Activated CD4-positive, alpha-beta T cell treated with anti-CD3 and anti-CD28 coated beads for 36 hours (primary cell): ENCODE measurements at regions of chr7 and their contacts with region 1.

Region 1: DNA sequence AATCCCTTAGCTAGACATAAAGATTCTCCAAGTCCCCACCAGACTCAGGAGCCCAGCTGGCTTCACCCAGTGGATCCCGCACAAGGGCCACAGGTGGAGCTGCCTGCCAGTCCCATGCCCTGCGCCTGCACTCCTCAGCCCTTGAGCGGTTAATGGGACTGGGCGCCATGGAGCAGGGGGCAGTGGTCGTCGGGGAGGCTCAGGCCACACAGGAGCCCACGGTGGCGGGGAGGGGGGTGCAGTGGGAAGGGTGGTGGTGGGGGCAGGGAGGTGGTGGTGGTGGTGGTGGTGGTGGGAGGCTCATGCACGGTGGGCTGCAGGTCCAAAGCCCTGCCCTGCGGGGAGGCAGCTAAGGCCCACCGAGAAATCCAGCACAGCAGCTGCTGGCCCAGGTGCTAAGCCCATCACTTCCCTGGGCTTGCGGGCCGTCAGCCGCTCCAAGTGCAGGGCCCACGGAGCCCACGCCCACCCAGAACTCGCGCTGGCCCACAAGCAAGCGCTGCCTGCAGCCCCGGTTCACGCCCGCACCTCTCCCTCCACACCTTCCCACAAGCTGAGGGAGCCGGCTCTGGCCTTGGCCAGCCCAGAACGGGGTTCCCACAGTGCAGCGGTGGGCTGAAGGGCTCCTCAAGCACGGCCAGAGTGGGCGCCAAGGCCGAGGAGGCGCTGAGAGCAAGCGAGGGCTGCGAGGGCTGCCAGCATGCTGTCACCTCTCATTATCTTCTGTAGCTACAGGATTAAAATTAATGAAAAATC is 732.5 kb upstream of the POM121L12 start:
- DNase-seq: no peak
- ATAC-seq: no peak
- H3K4me3 Mint-ChIP-seq: no peak overlapping the region
- H3K27ac Mint-ChIP-seq: no peak overlapping the region
- H3K4me1 Mint-ChIP-seq: peaks cover 3% of the 10 kb centered on the region
- H3K27me3 Mint-ChIP-seq: no peaks in the 10 kb centered on the region

Region 2: DNA sequence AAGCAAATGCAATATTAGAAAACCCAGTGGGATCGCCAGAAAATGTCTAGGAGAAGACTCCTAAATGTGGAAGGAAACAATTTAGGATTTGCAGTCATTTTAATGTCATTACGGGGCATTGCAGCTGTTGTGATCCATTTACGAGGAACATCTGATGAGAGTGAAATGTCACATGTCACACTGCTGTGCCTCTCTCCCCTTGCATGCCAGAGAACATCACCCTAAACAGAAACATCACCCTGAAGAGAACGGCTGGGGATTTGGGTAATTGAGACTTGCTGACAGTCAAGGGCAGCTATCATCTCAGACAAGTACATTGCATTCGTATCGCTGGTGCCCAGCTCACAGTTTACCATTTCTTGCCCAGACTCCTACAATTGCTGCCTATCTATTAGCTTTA is 53.2 kb before region 1 on chr7:
- CTCF ChIA-PET with region 1: no interaction called
- POLR2A ChIA-PET with region 1: no interaction called
- intact Hi-C with region 1: loop called in 1 of 2 experiments (anchors 10 kb)
- DNase-seq: no peak
- ATAC-seq: no peak
- H3K4me3 Mint-ChIP-seq: no peak overlapping the region
- H3K27ac Mint-ChIP-seq: no peak overlapping the region
- H3K4me1 Mint-ChIP-seq: no peaks in the 10 kb centered on the region
- H3K27me3 Mint-ChIP-seq: no peaks in the 10 kb centered on the region

Region 3: GRCh38 chr7:52565974-52566373 is 263.0 kb after region 1 on chr7:
- CTCF ChIA-PET with region 1: no interaction called
- POLR2A ChIA-PET with region 1: no interaction called
- intact Hi-C with region 1: no loop called
- DNase-seq: no peak
- ATAC-seq: no peak
- H3K4me3 Mint-ChIP-seq: no peak overlapping the region
- H3K27ac Mint-ChIP-seq: no peak overlapping the region
- H3K4me1 Mint-ChIP-seq: no peaks in the 10 kb centered on the region
- H3K27me3 Mint-ChIP-seq: no peaks in the 10 kb centered on the region